Heart right ventricle (tissue), 16 donors: ENCODE measurements at regions of chr5 and their contacts with region 1.

Region 1: GRCh38 chr5:138491669-138492559 is 26.6 kb downstream of the EGR1 start:
- DNase-seq: peak; percentile 91 to 93
- ATAC-seq: peak; percentile 96 to 98 (median 98)
- H3K4me3 ChIP-seq: peak overlapping the region; percentile 45 to 67 (median 60)
- H3K27ac ChIP-seq: peak overlapping the region in 8 of 10 donors; percentile 50 to 77 (median 70)
- H3K4me1 ChIP-seq: peaks cover 14 to 41% (median 31%) of the 10 kb centered on the region in 9 donors
- H3K27me3 ChIP-seq: peaks cover 0 to 28% (median 0%) of the 10 kb centered on the region in 7 donors
- CTCF ChIP-seq: no peak

Region 2: DNA sequence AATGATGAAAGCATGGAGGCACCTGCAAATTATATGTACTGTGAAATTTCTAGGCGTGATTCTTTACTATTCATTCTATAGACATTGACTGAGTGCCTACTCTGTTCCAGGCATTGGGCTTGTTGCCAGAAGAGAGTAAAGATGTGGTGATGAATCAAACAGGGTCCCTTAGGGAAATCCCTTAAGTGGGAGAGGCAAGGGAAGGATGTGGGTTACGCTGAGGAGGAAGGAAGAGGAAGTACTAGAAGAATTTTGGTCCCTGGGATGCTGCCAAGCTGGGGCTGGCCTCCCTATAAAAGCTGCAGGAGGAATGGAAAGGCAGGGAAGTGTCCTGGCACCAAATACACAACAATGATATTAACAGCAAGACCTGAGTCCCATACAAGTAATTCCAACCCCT is 916.1 kb before region 1 on chr5:
- intact Hi-C with region 1: no loop called
- DNase-seq: no peak
- ATAC-seq: no peak
- H3K4me3 ChIP-seq: no peak overlapping the region
- H3K27ac ChIP-seq: no peak overlapping the region
- H3K4me1 ChIP-seq: peaks cover 0 to 9% (median 0%) of the 10 kb centered on the region in 9 donors
- H3K27me3 ChIP-seq: peaks cover 0 to 9% (median 0%) of the 10 kb centered on the region in 7 donors
- CTCF ChIP-seq: no peak

Region 3: GRCh38 chr5:138305797-138306196 is 186.1 kb before region 1 on chr5:
- intact Hi-C with region 1: no loop called
- DNase-seq: peak; percentile 52 to 67
- ATAC-seq: peak in 7 of 8 donors; percentile 55 to 96 (median 88)
- H3K4me3 ChIP-seq: no peak overlapping the region
- H3K27ac ChIP-seq: peak overlapping the region in 2 of 10 donors; percentile 9 to 45
- H3K4me1 ChIP-seq: peaks cover 0 to 3% (median 0%) of the 10 kb centered on the region in 9 donors
- H3K27me3 ChIP-seq: no peaks in the 10 kb centered on the region
- CTCF ChIP-seq: peak in 2 of 9 donors; percentile 13 to 35

Region 4: DNA sequence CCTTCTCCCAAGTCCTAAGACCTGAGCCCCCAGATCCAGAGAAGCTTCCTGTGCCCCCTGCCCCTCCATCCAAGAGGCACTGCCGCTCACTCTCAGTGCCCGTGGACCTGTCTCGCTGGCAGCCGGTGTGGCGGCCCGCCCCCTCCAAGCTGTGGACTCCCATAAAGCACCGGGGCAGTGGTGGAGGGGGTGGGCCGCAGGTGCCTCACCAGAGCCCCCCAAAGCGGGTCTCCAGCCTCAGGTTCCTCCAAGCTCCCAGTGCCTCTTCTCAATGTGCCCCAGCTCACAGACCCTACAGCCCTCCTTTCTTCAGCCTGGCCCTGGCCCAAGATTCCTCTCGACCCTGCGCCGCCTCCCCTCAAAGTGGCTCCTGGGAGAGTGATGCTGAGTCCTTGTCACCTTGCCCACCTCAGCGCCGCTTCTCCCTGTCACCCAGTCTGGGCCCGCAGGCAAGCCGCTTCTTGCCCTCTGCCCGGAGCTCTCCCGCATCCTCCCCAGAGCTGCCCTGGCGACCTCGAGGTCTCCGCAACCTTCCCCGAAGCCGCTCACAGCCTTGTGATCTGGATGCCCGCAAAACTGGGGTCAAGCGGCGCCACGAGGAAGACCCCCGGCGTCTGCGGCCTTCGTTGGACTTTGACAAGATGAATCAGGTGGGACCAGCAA is 146.8 kb before region 1 on chr5:
- intact Hi-C with region 1: loop called in 2 of 10 experiments (anchors 5 kb)
- DNase-seq: no peak
- ATAC-seq: no peak
- H3K4me3 ChIP-seq: no peak overlapping the region
- H3K27ac ChIP-seq: no peak overlapping the region
- H3K4me1 ChIP-seq: peaks cover 0 to 28% (median 17%) of the 10 kb centered on the region in 9 donors
- H3K27me3 ChIP-seq: no peaks in the 10 kb centered on the region
- CTCF ChIP-seq: no peak

Region 5: DNA sequence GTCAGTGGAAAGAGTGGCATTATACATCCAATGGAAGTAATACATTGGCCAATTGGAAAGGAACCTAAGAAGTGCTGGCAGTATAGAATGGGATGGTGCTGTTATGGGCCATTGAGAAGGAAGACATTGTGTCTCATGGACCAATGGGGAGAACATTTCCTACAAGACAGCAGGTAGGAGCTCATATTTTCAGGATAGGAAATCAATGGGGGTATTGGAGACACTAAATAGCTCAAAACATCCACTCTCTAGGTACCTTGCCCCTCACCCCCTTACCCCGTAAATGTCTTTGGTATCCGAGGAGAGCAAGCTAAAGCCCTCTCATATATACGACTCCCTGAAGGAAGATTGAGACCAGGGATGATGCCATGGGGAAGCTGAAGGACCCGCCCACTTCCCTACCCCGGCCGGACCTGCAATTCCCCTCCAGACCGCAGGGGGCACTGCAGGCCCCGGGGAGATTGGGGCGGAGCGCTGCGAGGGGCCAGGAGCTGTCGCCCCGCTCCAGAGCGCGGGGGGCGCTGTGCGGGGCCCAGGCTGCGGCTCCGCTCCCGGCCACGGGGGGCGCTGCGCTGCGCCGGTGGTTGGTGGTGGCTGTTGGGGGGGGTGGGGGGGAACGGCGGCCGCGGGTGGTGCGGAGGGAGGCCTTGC is 139.7 kb before region 1 on chr5 and contains the start of gene KDM3B:
- intact Hi-C with region 1: loop called in 1 of 10 experiments (anchors 5 kb)
- DNase-seq: peak; percentile 76 to 88
- ATAC-seq: peak; percentile 77 to 90 (median 85)
- H3K4me3 ChIP-seq: peak within 1 kb of the TSS; percentile 73 to 99 (median 94)
- H3K27ac ChIP-seq: peak within 1 kb of the TSS; percentile 86 to 99 (median 97)
- H3K4me1 ChIP-seq: peaks cover 8 to 70% (median 51%) of the 10 kb centered on the region in 9 donors
- H3K27me3 ChIP-seq: no peaks in the 10 kb centered on the region
- CTCF ChIP-seq: peak; percentile 82 to 99 (median 90)
- total RNA-seq, gene KDM3B: 31.9 to 57.3 (median 48.3) TPM

Region 6: DNA sequence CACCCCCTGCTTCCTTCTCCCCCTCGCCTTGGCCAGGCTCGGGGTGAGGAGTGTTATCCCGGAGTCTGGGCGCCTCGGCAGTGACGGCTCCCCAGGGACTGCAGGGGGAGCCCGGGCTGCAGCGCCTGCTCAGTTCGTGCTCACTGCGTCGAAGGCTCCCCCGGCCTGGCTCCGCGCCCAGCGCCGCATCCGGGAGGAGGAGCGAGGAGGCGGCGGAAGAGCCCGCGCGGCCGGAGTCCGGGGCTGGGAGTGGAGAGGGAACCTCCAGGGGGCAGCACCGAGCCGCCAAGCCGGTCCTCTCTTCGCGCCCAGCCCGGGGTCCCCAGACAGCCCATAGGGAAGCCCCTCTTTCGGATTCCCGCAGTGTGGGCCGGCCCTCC is 27.9 kb before region 1 on chr5:
- intact Hi-C with region 1: loop called in 3 of 10 experiments (anchors 1 to 5 kb)
- DNase-seq: peak; percentile 95 to 98
- ATAC-seq: peak; percentile 72 to 89 (median 86)
- H3K4me3 ChIP-seq: peak overlapping the region; percentile 57 to 98 (median 76)
- H3K27ac ChIP-seq: peak overlapping the region; percentile 93 to 99 (median 96)
- H3K4me1 ChIP-seq: peaks cover 2 to 70% (median 67%) of the 10 kb centered on the region in 9 donors
- H3K27me3 ChIP-seq: no peaks in the 10 kb centered on the region
- CTCF ChIP-seq: peak; percentile 84 to 98 (median 94)

Region 7: GRCh38 chr5:138503487-138504270 is 11.8 kb after region 1 on chr5:
- intact Hi-C with region 1: loop called in 1 of 10 experiments (anchors 1 kb)
- DNase-seq: peak in 1 of 2 donors; percentile 47
- ATAC-seq: peak; percentile 66 to 88 (median 78)
- H3K4me3 ChIP-seq: no peak overlapping the region
- H3K27ac ChIP-seq: peak overlapping the region in 6 of 10 donors; percentile 32 to 58 (median 48)
- H3K4me1 ChIP-seq: peaks cover 0 to 28% (median 13%) of the 10 kb centered on the region in 9 donors
- H3K27me3 ChIP-seq: no peaks in the 10 kb centered on the region
- CTCF ChIP-seq: peak; percentile 54 to 82 (median 76)

Region 8: GRCh38 chr5:138542956-138543729 is 51.2 kb after region 1 on chr5 and contains the start of gene ETF1:
- intact Hi-C with region 1: loop called in 1 of 10 experiments (anchors 2 kb)
- DNase-seq: peak; percentile 100
- ATAC-seq: peak; percentile 94 to 97 (median 95)
- H3K4me3 ChIP-seq: peak within 1 kb of the TSS; percentile 73 to 99 (median 94)
- H3K27ac ChIP-seq: peak within 1 kb of the TSS; percentile 91 to 99 (median 98)
- H3K4me1 ChIP-seq: peaks cover 13 to 84% (median 69%) of the 10 kb centered on the region in 9 donors
- H3K27me3 ChIP-seq: no peaks in the 10 kb centered on the region
- CTCF ChIP-seq: peak in 3 of 9 donors; percentile 3 to 28 (median 13)
- total RNA-seq, gene ETF1: 73.5 to 113 (median 83.9) TPM